ENCODE measurements at regions of chr13 and their contacts with region 1.

Region 1: GRCh38 chr13:39575638-39576238 is 27.3 kb downstream of the LHFPL6 start:
- DNase-seq: no peak
- H3K4me3 ChIP-seq: no peak overlapping the region
- H3K27ac ChIP-seq: no peak overlapping the region
- H3K4me1 ChIP-seq: no peaks in the 10 kb centered on the region
- H3K27me3 ChIP-seq: no peaks in the 10 kb centered on the region
- CTCF ChIP-seq: no peak
- POLR2A ChIP-seq: no peak

Region 2: DNA sequence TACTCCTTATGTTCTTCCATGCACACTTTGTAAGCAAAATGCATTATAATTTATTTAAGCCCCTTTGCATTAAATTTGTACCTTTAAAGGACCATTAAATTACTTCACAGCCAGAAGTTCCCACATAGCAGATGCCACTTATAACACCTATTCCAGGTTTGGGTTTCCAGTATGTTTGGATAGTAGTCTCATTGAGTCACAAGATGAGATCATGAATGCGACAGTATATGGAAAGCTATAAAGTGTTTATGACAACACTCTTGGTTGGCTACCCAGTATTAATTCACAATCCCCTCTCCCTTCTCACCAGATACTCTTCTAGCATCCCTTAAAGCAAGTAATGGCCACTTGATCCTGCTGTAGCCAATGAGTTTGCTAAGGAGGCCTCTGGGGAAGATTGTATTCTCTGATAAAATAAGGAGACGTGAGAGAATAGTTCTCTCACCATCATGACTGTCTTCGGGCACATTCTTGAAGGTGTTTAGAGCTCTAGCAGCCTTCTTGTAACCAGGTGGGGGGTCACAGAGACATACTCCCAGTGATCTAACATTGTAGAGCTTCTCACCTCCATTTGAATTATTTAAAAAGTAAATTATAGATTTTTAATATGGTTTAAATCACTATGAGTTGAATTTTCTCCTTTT is 30.1 kb after region 1 on chr13:
- intact Hi-C with region 1: loop called (anchors 2 kb)
- DNase-seq: no peak
- H3K4me3 ChIP-seq: no peak overlapping the region
- H3K27ac ChIP-seq: no peak overlapping the region
- H3K4me1 ChIP-seq: no peaks in the 10 kb centered on the region
- H3K27me3 ChIP-seq: no peaks in the 10 kb centered on the region
- CTCF ChIP-seq: no peak
- POLR2A ChIP-seq: no peak

Region 3: DNA sequence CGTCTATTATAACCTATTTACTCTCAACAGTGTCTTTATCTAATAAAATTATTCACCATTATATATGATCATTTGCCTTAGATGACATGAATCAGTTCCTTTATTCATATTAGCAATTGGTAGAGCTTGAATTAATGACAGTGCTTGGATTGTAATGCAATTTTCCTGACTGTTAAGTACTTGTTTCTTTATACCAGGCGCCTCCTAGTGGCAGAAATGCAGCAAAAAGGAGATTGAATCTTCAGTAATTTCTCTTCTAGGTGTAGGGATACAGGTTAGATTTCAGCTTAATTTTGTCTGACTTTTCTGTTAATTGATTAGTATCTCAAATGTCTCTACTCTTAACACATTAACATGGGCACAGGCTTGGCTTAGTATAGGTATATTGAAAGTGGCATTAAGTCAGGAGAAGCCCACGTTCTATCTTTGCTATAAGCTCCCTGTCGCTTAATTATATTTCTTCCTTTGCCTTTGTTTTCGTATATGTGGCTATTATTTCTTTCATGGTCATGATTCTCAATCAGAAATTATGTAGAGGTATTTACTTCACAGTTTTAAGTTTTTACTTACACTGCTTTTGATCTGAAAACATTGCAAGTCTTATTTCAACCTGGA is 36.4 kb after region 1 on chr13:
- intact Hi-C with region 1: loop called (anchors 2 kb)
- DNase-seq: peak in 1 of 2 donors; percentile 53
- H3K4me3 ChIP-seq: no peak overlapping the region
- H3K27ac ChIP-seq: no peak overlapping the region
- H3K4me1 ChIP-seq: no peaks in the 10 kb centered on the region
- H3K27me3 ChIP-seq: no peaks in the 10 kb centered on the region
- CTCF ChIP-seq: peak; percentile 82 to 96 (median 90)
- POLR2A ChIP-seq: no peak

Measured in breast epithelium (tissue), 4 donors.